PC-9 (cell line): ENCODE measurements at regions of chr12 and their contacts with region 1.

Region 1: DNA sequence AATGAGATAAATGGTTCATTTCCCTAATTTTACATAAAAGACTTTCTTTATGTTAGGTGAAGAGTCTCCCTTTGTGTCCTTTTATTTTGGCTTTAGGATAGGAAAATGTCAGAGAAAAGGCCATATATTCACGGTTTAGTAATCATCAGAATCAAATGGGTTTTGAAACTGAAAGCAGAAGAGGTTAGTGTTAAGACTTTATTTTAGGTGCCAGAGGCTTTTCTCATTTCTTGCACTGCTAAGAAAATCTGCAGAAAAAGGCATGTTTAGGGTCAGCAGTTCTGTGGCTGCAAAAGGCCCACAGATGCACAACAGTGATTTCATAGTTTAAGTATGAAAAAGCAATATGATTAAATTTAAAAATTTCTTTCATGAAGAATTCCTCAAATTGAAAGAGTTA is 80.4 kb upstream of the SINHCAF start:
- DNase-seq: no peak
- H3K4me3 ChIP-seq: no peak overlapping the region
- H3K27ac ChIP-seq: no peak overlapping the region
- H3K4me1 ChIP-seq: no peaks in the 10 kb centered on the region
- H3K27me3 ChIP-seq: no peaks in the 10 kb centered on the region
- CTCF ChIP-seq: no peak

Region 2: GRCh38 chr12:31245822-31246469 is 160.4 kb before region 1 on chr12:
- CTCF ChIA-PET with region 1: interaction called, 10 read pairs
- POLR2A ChIA-PET with region 1: no interaction called
- intact Hi-C with region 1: loop called (anchors 1 kb)
- DNase-seq: peak in 1 of 2 experiments; percentile 33
- H3K4me3 ChIP-seq: no peak overlapping the region
- H3K27ac ChIP-seq: no peak overlapping the region
- H3K4me1 ChIP-seq: no peaks in the 10 kb centered on the region
- H3K27me3 ChIP-seq: no peaks in the 10 kb centered on the region
- CTCF ChIP-seq: no peak

Region 3: GRCh38 chr12:31280183-31280582 is 126.2 kb before region 1 on chr12:
- CTCF ChIA-PET with region 1: no interaction called
- POLR2A ChIA-PET with region 1: no interaction called
- intact Hi-C with region 1: no loop called
- DNase-seq: no peak
- H3K4me3 ChIP-seq: no peak overlapping the region
- H3K27ac ChIP-seq: no peak overlapping the region
- H3K4me1 ChIP-seq: no peaks in the 10 kb centered on the region
- H3K27me3 ChIP-seq: no peaks in the 10 kb centered on the region
- CTCF ChIP-seq: no peak

Region 4: GRCh38 chr12:31387466-31387865 is 18.9 kb before region 1 on chr12:
- CTCF ChIA-PET with region 1: no interaction called
- POLR2A ChIA-PET with region 1: no interaction called
- intact Hi-C with region 1: no loop called
- DNase-seq: no peak
- H3K4me3 ChIP-seq: no peak overlapping the region
- H3K27ac ChIP-seq: no peak overlapping the region
- H3K4me1 ChIP-seq: no peaks in the 10 kb centered on the region
- H3K27me3 ChIP-seq: no peaks in the 10 kb centered on the region
- CTCF ChIP-seq: no peak

Region 5: DNA sequence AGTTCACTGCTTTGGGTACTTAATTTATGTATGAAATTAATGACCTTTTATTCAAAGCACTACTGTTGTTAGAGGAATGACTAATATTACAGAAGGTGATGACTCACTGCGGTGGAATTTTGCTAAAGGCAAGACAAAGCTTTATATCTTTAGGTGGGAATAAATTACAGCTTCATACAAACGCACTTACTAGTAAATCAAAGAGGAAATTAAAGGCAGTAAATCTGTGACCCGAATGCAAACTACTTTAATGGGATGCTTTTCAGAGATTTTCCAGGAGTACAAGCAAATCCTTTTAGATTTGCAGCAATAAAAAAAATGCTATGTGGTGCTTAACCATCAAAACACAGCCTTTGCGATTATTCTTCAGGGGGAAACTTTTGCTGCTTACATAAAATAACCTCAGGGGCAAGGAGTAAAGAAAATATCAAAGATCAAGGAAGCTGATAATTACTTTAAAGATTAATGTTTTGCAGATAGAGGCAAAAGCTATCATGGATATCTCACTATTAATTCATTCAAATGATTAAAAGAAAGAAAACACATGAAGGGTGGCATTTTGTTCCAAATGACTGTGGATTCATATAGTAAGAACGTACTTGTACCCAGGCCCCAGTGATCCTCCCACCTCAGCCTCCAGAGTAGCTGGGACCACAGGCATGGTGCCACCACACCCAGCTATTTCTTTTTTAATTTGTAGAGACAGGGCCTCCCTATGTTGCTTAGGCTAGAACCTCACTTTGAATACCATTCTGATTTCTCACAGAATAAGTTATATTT is 85.7 kb after region 1 on chr12:
- CTCF ChIA-PET with region 1: interaction called, 14 read pairs
- POLR2A ChIA-PET with region 1: no interaction called
- intact Hi-C with region 1: no loop called
- DNase-seq: peak; percentile 68 to 90
- H3K4me3 ChIP-seq: no peak overlapping the region
- H3K27ac ChIP-seq: peak overlapping the region; percentile 60
- H3K4me1 ChIP-seq: peaks cover 33% of the 10 kb centered on the region
- H3K27me3 ChIP-seq: no peaks in the 10 kb centered on the region
- CTCF ChIP-seq: no peak

Region 6: GRCh38 chr12:31631784-31632183 is 225.4 kb after region 1 on chr12:
- CTCF ChIA-PET with region 1: interaction called, 16 read pairs
- POLR2A ChIA-PET with region 1: no interaction called
- intact Hi-C with region 1: loop called (anchors 1 kb)
- DNase-seq: no peak
- H3K4me3 ChIP-seq: no peak overlapping the region
- H3K27ac ChIP-seq: no peak overlapping the region
- H3K4me1 ChIP-seq: no peaks in the 10 kb centered on the region
- H3K27me3 ChIP-seq: no peaks in the 10 kb centered on the region
- CTCF ChIP-seq: no peak

Region 7: DNA sequence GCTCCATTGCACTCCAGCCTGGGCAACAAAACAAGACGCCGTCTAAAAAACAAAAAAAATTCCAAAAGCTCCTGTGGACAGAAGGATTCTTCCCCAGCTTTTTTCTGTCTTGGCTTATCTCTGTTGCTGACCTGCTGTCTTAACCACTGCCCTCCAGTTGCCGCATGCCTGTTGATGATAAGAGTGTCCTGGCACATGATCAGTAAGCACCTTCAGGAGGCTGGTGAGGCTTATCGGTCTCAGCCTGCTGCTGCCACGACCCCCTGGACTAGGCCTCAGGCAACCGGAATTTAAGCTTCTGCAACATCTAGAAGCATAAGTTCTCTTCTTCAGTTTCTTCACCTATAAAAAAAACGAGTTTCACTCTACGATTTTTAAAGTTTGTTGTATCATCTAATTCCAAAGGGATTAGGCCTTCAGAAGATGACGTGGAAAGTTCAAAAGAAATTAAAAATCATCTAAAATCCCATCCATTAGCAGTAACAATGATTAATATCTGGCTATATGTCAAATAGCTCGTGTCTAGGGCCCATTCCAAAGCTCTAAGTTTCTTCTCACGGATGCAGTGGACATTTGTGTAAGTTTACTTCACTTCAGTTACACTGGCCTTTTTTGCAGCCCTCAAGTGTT is 599.3 kb after region 1 on chr12:
- CTCF ChIA-PET with region 1: interaction called, 12 read pairs
- POLR2A ChIA-PET with region 1: no interaction called
- intact Hi-C with region 1: no loop called
- DNase-seq: no peak
- H3K4me3 ChIP-seq: no peak overlapping the region
- H3K27ac ChIP-seq: no peak overlapping the region
- H3K4me1 ChIP-seq: no peaks in the 10 kb centered on the region
- H3K27me3 ChIP-seq: no peaks in the 10 kb centered on the region
- CTCF ChIP-seq: no peak

Region 8: DNA sequence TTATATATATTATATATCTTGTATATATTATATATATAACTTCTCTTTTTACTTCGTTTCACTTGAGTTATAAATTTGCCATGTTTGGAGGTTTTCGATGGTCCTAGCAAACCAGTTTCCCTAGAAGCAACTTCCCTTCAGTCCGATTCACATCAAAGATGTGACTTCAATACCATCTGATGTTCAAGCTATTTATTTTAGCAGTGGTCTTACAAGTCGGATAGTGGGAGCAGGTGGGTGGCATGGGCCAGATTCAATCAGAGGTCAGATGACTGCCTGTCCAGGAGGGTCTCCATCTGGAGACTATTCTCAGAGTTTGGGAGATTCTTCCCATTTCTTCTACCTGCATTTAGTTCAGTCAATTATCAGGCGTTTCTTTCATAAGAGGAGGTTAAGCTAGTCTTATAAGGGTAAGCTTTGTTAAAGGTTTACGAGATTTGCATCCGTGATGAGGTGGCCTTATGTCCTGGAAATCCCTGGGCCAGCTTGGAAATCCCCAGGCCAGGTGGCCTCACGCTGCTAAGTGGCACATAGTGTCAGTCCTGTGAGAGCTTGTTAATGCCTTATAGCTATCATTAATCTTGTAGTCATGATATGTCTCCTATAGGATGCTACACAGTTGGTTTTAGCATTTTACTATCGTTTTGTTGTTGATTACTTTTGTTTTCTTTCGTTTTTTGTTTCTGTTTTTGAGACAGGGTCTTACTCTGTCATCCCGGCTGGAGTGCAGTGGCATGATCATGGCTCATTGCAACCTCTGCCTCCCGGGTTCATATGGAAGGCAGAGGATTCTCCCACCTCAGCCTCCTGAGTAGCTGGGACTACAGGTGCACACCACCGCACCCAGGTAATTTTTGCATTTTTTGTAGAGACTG is 846.1 kb after region 1 on chr12:
- CTCF ChIA-PET with region 1: no interaction called
- POLR2A ChIA-PET with region 1: no interaction called
- intact Hi-C with region 1: no loop called
- DNase-seq: no peak
- H3K4me3 ChIP-seq: no peak overlapping the region
- H3K27ac ChIP-seq: no peak overlapping the region
- H3K4me1 ChIP-seq: no peaks in the 10 kb centered on the region
- H3K27me3 ChIP-seq: no peaks in the 10 kb centered on the region
- CTCF ChIP-seq: no peak